ENCODE measurements at regions of chr1 and their contacts with region 1.

Region 1: DNA sequence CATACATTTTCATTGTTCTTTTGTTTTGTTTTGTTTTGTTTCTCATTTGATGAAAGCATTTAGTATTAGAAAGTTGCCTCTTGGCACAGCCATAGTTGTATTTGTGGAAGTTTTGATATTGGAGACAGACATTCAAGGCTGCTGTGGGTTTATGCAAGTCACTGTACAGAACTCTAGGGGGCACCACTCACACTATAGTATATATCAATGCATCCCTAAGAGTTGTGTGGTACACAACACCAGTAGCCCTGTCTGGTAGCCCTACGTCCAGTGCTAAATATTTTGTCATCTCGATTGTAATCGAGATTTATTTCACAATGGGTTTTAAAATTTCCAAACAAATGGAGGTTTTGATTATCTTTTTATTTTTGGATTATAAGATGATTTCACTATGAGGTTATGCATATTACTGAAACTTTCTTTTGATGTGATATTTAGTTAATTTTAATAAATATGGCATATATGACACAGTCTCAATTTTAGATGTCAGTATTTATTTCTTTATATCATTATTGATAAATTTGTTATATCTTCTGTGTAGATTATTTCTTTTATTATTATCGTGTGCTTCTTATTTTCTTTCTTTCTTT is 112.2 kb downstream of the NR5A2 start:
- DNase-seq: peak; percentile 79
- H3K4me3 ChIP-seq: no peak overlapping the region
- H3K27ac ChIP-seq: no peak overlapping the region
- H3K4me1 ChIP-seq: no peaks in the 10 kb centered on the region
- H3K27me3 ChIP-seq: no peaks in the 10 kb centered on the region
- CTCF ChIP-seq: peak; percentile 88

Region 2: DNA sequence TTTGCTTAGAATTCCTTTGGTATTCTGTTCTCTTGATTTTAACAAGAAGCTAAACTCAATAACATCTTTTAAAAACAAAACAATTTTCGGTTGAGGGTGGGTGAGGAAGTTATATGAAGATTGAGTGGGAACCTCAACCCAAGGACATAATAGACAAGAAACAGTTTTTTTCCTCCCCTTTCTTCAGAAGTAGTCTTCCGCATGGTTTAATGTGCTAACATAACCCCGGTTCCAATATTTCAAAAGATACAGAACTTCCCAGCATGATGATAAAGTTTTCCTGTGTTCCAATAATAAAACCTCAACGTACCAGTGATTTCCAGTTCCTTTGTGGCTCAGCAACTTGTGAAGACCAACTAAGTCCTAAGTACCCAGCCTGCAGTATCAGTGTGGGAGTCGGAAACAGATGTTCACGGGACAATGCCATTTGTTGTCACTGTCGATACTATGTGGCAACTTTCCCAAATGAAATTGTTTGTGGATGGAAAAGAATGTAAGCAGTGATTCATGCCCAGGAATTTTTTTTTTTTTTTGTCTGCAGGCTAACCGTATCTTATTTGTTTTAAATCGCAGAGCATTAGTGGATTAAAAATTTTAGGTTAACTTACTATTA is 63.7 kb before region 1 on chr1:
- CTCF ChIA-PET with region 1: no interaction called
- POLR2A ChIA-PET with region 1: no interaction called
- intact Hi-C with region 1: no loop called
- DNase-seq: peak; percentile 86
- H3K4me3 ChIP-seq: peak overlapping the region; percentile 3
- H3K27ac ChIP-seq: no peak overlapping the region
- H3K4me1 ChIP-seq: peaks cover 11% of the 10 kb centered on the region
- H3K27me3 ChIP-seq: peaks cover 15% of the 10 kb centered on the region
- CTCF ChIP-seq: no peak

Region 3: GRCh38 chr1:200279810-200280411 is 140.2 kb after region 1 on chr1:
- CTCF ChIA-PET with region 1: no interaction called
- POLR2A ChIA-PET with region 1: no interaction called
- intact Hi-C with region 1: loop called (anchors 10 kb)
- DNase-seq: peak; percentile 77
- H3K4me3 ChIP-seq: no peak overlapping the region
- H3K27ac ChIP-seq: no peak overlapping the region
- H3K4me1 ChIP-seq: no peaks in the 10 kb centered on the region
- H3K27me3 ChIP-seq: no peaks in the 10 kb centered on the region
- CTCF ChIP-seq: peak; percentile 80

Region 4: GRCh38 chr1:200302192-200302920 is 162.6 kb after region 1 on chr1:
- CTCF ChIA-PET with region 1: no interaction called
- POLR2A ChIA-PET with region 1: no interaction called
- intact Hi-C with region 1: loop called (anchors 2 kb)
- DNase-seq: peak; percentile 33
- H3K4me3 ChIP-seq: peak overlapping the region; percentile 69
- H3K27ac ChIP-seq: no peak overlapping the region
- H3K4me1 ChIP-seq: peaks cover 6% of the 10 kb centered on the region
- H3K27me3 ChIP-seq: no peaks in the 10 kb centered on the region
- CTCF ChIP-seq: no peak; the same call in 1 of the 2 replicates